Mucosa of descending colon (tissue), 3 donors: ENCODE measurements at regions of chr11 and their contacts with region 1.

Region 1: GRCh38 chr11:25981998-25982397 is 349.9 kb upstream of the ANO3 start:
- DNase-seq: peak in 1 of 3 donors; percentile 42
- ATAC-seq: peak; percentile 55
- H3K4me3 ChIP-seq: no peak overlapping the region
- H3K4me1 ChIP-seq: no peaks in the 10 kb centered on the region
- CTCF ChIP-seq: peak; percentile 15

Region 2: DNA sequence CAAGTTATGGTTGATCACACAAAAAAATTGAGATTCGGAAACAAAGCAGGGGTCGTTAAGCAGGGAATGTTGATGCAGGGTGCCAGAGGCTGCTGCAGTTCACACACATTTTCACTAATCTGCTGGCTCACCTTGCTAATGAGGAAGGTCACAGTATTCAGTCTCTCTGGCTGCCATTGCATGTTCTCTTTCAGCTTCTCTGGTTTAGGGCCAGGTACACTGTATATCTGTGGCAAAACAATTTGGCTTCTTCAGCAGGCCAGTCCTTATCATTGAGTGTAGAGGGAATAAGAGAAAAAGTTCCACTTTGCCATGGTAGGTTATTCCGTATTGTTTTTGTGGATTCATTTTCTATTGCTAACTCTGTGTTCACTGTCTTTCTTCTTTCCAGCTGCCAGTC is 66.3 kb after region 1 on chr11:
- intact Hi-C with region 1: no loop called
- DNase-seq: no peak
- ATAC-seq: no peak
- H3K4me3 ChIP-seq: no peak overlapping the region
- H3K4me1 ChIP-seq: no peaks in the 10 kb centered on the region
- CTCF ChIP-seq: no peak

Region 3: DNA sequence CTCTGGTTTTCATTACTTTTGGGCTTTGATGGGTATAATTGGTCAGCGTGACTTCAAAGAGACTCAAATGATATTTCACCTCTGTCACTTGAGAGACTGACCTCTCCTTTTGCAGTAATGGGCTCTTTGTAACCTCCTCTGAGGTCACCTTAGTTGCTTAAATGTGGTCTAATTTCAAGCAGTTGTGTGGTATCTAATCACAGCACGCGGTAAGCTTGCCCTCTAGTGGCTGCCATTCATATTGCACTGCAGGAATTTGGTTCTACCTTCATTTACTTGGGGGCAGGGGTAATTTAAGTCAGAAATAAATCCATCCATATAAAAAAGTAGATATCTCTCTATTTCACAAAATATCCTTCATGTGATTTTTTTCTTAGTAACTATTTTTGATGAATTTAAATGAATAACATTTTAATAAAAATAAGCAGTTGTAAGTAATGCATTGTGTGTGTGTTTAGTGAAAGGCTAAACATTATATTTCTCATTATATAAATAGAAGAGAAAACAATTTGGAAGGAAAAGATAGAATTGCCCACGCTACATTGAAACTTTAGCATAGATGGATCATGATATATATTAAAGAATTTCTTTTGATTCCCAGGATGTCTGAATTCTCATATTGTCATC is 294.9 kb after region 1 on chr11:
- intact Hi-C with region 1: loop called in 1 of 2 experiments (anchors 10 kb)
- DNase-seq: peak in 2 of 3 donors; percentile 22 to 73
- ATAC-seq: peak; percentile 67
- H3K4me3 ChIP-seq: no peak overlapping the region
- H3K4me1 ChIP-seq: no peaks in the 10 kb centered on the region
- CTCF ChIP-seq: peak; percentile 87